Common myeloid progenitor, CD34-positive (primary cell): ENCODE measurements at regions of chr17 and their contacts with region 1.

Region 1: DNA sequence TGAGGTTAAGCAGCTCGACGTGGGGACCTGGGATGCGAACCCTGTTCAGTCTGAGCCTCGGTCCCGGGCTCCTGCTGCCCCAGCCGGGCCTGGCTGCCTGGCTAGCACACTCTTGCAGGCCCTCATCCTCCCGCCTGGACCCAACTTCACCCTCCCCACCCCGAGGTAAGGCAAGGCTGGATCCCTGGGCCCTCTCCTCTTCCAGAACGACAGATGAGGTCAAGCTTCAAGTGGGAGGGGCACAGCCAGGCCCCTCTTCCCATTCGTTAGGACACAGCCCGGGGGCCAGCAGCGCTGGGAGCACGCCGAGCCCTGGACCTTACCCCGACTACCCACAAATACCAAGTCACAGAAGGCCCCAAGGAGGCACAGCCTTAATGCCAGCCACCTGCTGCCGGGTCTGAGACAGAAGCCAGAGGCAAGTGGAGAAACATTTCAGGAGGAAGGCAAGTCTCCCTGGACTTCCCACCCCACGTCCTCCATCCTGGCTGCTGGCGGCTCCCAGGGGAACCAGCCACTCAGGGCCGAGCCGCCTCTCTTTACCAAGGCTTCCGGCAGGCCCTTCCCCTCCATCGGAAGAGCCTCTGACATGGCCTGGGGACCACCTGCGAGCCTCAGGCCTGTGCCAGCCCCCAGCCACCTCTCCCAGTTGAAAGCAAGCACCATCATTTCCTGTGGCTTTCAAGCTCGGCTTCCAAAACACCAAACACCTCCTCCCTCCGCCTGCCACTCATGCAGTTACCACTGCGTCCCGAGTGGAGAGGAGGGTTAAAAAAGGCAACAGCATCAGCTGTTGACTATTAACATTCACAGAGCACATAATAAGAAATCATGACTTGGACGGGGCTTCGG is 59.9 kb downstream of the RPH3AL start:
- DNase-seq: peak; percentile 48 to 80 (median 75)
- H3K4me3 ChIP-seq: peak overlapping the region in 2 of 7 experiments; percentile 18 to 19
- H3K27ac ChIP-seq: no peak overlapping the region
- H3K4me1 ChIP-seq: peaks cover 0 to 21% (median 11%) of the 10 kb centered on the region in 4 experiments
- H3K27me3 ChIP-seq: no peaks in the 10 kb centered on the region

Region 2: DNA sequence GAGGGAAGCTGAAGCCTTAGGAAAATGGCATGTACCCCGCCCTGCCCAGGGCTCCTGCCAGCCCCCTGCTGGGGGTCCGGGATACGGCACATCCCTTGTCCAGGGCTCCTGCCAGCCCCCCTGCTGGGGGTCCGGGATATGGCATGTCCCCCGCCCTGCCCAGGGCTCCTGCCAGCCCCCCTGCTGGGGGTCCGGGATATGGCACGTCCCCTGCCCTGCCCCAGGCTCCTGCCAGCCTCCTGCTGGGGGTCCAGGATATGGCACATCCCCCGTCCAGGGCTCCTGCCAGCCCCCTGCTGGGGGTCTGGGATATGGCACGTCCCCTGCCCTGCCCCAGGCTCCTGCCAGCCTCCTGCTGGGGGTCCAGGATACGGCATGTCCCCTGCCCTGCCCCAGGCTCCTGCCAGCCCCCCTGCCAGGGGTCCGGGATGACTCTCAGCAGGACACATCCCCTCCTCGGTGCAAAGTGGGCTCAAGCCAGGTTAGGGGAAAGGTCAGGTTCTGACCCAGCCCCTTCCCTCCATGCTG is 16.7 kb after region 1 on chr17:
- CTCF ChIA-PET with region 1: interaction called, 20 read pairs
- POLR2A ChIA-PET with region 1: no interaction called
- DNase-seq: peak; percentile 91 to 94 (median 92)
- H3K4me3 ChIP-seq: no peak overlapping the region
- H3K27ac ChIP-seq: no peak overlapping the region
- H3K4me1 ChIP-seq: peaks cover 0 to 22% (median 6%) of the 10 kb centered on the region in 4 experiments
- H3K27me3 ChIP-seq: no peaks in the 10 kb centered on the region